Endothelial cell of umbilical vein (primary cell): ENCODE measurements at regions of chr1 and their contacts with region 1.

Region 1: DNA sequence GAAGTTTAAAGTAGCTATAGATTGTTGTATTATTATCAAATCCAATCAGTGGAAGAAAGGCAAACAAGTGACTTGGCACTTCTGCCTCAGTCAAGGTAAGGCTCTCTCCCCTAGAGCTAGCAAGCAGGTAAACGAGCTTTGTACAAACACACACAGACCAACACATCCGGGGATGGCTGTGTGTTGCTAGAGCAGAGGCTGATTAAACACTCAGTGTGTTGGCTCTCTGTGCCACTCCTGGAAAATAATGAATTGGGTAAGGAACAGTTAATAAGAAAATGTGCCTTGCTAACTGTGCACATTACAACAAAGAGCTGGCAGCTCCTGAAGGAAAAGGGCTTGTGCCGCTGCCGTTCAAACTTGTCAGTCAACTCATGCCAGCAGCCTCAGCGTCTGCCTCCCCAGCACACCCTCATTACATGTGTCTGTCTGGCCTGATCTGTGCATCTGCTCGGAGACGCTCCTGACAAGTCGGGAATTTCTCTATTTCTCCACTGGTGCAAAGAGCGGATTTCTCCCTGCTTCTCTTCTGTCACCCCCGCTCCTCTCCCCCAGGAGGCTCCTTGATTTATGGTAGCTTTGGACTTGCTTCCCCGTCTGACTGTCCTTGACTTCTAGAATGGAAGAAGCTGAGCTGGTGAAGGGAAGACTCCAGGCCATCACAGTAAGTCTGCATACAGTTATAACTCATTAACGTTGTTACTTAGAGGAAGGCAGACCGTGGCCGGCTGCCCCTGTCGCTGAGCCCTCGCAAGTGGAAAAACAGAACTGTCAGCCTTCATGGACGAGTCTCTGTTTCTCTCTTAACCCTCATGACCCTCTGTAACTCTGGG is at the start of gene PALMD:
- DNase-seq: peak; percentile 86
- H3K4me3 ChIP-seq: peak within 1 kb of the TSS; percentile 68 to 99 (median 90)
- H3K27ac ChIP-seq: peak within 1 kb of the TSS; percentile 94
- H3K4me1 ChIP-seq: peaks cover 42% of the 10 kb centered on the region
- H3K27me3 ChIP-seq: no peaks in the 10 kb centered on the region
- CTCF ChIP-seq: no peak
- POLR2A ChIP-seq: peak; percentile 93
- total RNA-seq, gene PALMD: 137 and 140 TPM in 2 replicates

Region 2: DNA sequence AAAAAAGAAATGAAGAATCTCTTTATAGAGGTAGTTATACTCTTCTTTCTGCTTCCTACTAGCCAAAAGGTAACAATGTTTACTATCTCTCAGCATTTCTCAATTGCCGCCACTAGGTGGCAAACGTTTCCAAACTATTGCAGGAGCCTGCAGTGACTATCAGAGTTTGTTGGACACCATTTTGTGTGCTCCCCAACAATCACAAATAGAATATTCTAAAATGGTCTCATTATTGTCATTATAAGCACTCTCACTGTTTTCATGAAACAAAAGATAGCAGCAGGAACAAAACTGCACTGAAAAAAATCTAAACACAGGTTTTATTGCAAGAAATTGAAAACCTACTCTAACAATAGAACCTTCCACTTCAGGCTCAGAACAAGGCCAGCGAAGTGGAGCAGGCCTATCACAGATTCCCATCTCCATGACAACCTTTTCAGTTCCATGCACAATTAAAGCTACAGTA is 465.5 kb before region 1 on chr1:
- CTCF ChIA-PET with region 1: interaction called, 10 read pairs
- POLR2A ChIA-PET with region 1: no interaction called
- dilution Hi-C with region 1: no loop called
- intact Hi-C with region 1: loop called (anchors 1 kb)
- DNase-seq: peak; percentile 90
- H3K4me3 ChIP-seq: no peak overlapping the region
- H3K27ac ChIP-seq: no peak overlapping the region
- H3K4me1 ChIP-seq: no peaks in the 10 kb centered on the region
- H3K27me3 ChIP-seq: no peaks in the 10 kb centered on the region
- CTCF ChIP-seq: peak; percentile 57 to 68
- POLR2A ChIP-seq: no peak

Region 3: DNA sequence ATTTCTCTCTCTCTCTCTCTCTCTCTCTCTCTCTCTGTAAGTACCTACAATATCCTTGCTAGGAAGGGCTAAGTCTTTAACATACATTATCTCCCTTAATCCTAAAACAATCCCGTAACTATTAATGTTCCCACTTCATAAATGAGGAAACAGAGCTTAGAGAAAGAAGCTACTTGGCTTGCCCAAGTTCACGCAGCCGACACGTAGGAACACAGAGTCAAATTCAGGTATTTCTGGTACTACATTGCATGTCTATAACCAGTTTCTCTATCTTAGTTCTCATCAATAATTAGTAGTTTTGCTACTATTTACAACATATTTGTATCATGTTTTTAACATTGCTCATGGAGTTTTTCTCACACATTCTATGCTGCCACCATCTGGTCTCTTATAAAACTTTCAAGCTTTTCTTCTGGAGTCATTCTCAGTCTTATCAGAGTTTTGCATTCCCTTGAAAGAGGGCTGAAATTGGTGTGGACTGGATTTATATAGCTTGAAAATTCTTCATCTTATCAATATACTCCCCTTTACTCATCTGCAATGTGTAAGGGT is 118.9 kb before region 1 on chr1:
- CTCF ChIA-PET with region 1: interaction called, 34 read pairs
- POLR2A ChIA-PET with region 1: no interaction called
- dilution Hi-C with region 1: no loop called
- intact Hi-C with region 1: no loop called
- DNase-seq: peak; percentile 57
- H3K4me3 ChIP-seq: no peak overlapping the region
- H3K27ac ChIP-seq: no peak overlapping the region
- H3K4me1 ChIP-seq: no peaks in the 10 kb centered on the region
- H3K27me3 ChIP-seq: no peaks in the 10 kb centered on the region
- CTCF ChIP-seq: peak in 1 of 2 donors; percentile 21
- POLR2A ChIP-seq: no peak

Region 4: DNA sequence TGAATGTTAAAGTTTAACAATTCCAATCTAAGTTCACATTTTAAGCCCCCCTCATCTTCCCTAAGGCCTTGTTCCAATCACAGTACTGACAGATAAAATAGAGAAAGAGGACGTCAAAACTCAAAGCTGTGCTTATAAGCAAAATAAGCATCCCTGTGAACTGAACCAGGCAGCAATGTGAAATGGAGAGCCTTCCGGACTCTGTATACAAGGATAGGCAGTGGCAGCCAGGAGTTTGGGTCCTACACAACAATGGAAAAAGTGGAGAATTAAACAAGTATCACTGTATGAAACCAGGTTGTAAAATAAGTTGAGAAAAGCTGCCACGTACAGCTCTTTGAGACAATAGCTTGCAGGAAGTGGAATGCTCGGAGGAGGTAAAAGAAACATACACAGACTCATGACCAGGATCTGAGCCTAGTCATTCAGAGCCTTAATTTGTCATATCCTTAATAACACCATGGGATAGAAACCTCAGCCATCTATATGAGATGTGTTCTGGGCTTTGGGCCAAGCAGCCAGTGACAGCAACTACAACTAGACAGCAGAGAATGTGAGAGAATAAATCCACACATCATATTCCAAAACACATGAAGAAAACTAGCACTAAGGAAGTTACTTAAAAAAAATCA is 55.2 kb before region 1 on chr1:
- CTCF ChIA-PET with region 1: interaction called, 13 read pairs
- POLR2A ChIA-PET with region 1: interaction called, 5 read pairs
- dilution Hi-C with region 1: no loop called
- intact Hi-C with region 1: loop called (anchors 1 kb)
- DNase-seq: peak; percentile 99
- H3K4me3 ChIP-seq: no peak overlapping the region
- H3K27ac ChIP-seq: peak overlapping the region; percentile 97
- H3K4me1 ChIP-seq: peaks cover 59% of the 10 kb centered on the region
- H3K27me3 ChIP-seq: no peaks in the 10 kb centered on the region
- CTCF ChIP-seq: no peak
- POLR2A ChIP-seq: peak; percentile 61

Region 5: DNA sequence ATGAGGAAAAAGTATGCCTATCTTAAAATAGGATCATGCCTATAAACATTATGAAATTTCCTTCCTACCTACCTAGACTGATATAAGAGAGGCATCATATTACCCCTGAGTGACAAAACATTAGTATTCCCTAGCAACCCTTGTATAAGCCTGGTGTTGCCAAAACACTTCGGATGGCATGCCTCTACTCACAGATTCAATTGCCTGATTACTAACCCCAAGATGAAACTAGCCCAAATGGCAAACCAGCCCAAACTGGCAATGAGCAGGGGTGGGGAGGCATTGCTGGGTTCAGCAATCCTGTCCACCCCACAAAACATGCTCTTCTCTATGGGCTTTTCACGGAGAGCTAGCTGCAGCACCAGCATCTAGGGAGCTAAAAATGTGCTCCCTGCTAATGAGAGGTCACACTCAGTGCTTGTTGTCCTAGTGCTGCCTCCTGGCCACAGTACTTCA is 13.9 kb after region 1 on chr1:
- CTCF ChIA-PET with region 1: interaction called, 6 read pairs
- POLR2A ChIA-PET with region 1: interaction called, 3 read pairs
- dilution Hi-C with region 1: no loop called
- intact Hi-C with region 1: loop called (anchors 1 kb)
- DNase-seq: peak; percentile 91
- H3K4me3 ChIP-seq: no peak overlapping the region
- H3K27ac ChIP-seq: peak overlapping the region; percentile 62
- H3K4me1 ChIP-seq: peaks cover 81% of the 10 kb centered on the region
- H3K27me3 ChIP-seq: no peaks in the 10 kb centered on the region
- CTCF ChIP-seq: no peak
- POLR2A ChIP-seq: no peak

Region 6: DNA sequence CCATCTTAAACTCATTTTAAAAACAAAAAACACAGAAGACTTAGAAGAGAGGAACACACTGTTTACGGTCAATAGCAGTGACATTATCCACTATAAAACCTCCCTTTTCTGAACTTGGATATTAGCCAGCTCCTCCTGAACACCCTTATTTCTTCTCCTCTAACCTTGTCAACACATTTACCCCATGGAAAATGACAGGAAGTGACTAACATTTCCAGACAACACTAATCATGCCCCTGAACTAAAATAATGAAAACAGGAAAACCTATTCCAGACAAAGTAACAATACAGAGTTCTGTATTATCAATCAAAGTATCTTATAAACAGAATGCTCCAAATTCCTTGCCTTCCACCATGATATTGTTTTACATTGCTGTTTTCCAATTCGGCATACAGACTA is 45.3 kb after region 1 on chr1:
- CTCF ChIA-PET with region 1: interaction called, 19 read pairs
- POLR2A ChIA-PET with region 1: interaction called, 17 read pairs
- dilution Hi-C with region 1: no loop called
- intact Hi-C with region 1: loop called (anchors 1 kb)
- DNase-seq: peak; percentile 98
- H3K4me3 ChIP-seq: no peak overlapping the region
- H3K27ac ChIP-seq: peak overlapping the region; percentile 89
- H3K4me1 ChIP-seq: peaks cover 44% of the 10 kb centered on the region
- H3K27me3 ChIP-seq: no peaks in the 10 kb centered on the region
- CTCF ChIP-seq: no peak
- POLR2A ChIP-seq: peak; percentile 84